Activated naive CD8-positive, alpha-beta T cell treated with anti-CD3 and anti-CD28 coated beads, Interleukin-2, amount 10 ng/mL, durations not matched to agents 7 days and 5 days (primary cell): ENCODE measurements at regions of chr9 and their contacts with region 1.

Region 1: GRCh38 chr9:99104459-99105151 is at the start of gene TGFBR1:
- DNase-seq: peak; percentile 99
- ATAC-seq: peak; percentile 87
- H3K4me3 Mint-ChIP-seq: peak within 1 kb of the TSS; percentile 89
- H3K27ac Mint-ChIP-seq: peak within 1 kb of the TSS; percentile 95
- H3K4me1 Mint-ChIP-seq: peaks cover 51% of the 10 kb centered on the region
- H3K27me3 Mint-ChIP-seq: no peaks in the 10 kb centered on the region
- total RNA-seq, gene TGFBR1: 82.7 to 83.5 TPM

Region 2: GRCh38 chr9:99012942-99013512 is 91.6 kb before region 1 on chr9:
- POLR2A ChIA-PET with region 1: interaction called, 32 read pairs
- DNase-seq: peak; percentile 50
- ATAC-seq: peak; percentile 56
- H3K4me3 Mint-ChIP-seq: peak overlapping the region; percentile 71
- H3K27ac Mint-ChIP-seq: peak overlapping the region; percentile 96
- H3K4me1 Mint-ChIP-seq: peaks cover 27% of the 10 kb centered on the region
- H3K27me3 Mint-ChIP-seq: peaks cover 2% of the 10 kb centered on the region

Region 3: DNA sequence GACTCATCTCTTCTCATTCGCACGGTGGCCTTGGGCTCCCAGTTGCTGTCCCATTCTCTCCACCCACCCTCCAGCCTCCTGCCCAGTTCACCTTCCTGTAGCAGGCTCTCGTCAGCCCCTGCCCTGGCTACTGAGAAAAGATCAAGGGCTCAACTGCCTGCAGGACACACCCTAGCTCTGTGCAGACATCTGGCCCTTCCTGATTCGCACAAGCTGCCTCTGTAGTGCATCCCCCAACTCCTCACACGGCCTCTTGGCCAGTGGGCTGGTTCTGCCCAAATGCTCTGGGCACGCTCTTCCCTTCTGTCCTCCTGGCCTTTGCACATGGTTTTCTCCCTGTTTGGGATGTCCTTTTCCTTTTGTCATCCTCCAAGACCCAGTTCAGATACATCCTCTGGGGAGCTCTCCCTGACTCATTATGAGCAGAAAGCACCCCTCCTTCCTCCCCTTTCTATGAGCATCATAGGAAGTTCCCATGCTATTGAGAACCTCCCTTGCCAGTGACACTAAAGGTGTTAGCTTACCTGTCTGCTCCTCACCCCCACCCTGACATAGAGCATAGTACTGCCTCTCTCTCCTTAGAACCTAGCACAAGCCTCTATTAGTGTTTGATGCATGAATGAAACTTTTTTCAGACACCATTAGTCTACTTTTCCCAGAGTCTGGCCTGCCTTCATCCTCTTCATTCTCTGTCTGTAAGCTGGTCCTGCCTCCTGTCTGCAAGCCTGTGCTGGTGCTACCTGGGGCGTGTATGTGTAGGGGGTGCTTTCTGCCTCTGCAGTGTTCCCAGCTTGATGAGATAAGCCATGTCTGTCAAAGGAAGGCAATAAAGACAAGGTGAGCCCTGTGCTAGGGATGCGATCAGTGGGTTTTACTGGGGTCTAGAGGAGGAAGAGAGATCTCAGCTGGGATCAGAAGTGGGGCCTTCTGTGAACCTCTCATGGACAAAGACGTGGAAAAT is 78.0 kb before region 1 on chr9:
- POLR2A ChIA-PET with region 1: no interaction called
- DNase-seq: no peak
- ATAC-seq: peak; percentile 32
- H3K4me3 Mint-ChIP-seq: no peak overlapping the region
- H3K27ac Mint-ChIP-seq: peak overlapping the region; percentile 51
- H3K4me1 Mint-ChIP-seq: peaks cover 22% of the 10 kb centered on the region
- H3K27me3 Mint-ChIP-seq: no peaks in the 10 kb centered on the region

Region 4: DNA sequence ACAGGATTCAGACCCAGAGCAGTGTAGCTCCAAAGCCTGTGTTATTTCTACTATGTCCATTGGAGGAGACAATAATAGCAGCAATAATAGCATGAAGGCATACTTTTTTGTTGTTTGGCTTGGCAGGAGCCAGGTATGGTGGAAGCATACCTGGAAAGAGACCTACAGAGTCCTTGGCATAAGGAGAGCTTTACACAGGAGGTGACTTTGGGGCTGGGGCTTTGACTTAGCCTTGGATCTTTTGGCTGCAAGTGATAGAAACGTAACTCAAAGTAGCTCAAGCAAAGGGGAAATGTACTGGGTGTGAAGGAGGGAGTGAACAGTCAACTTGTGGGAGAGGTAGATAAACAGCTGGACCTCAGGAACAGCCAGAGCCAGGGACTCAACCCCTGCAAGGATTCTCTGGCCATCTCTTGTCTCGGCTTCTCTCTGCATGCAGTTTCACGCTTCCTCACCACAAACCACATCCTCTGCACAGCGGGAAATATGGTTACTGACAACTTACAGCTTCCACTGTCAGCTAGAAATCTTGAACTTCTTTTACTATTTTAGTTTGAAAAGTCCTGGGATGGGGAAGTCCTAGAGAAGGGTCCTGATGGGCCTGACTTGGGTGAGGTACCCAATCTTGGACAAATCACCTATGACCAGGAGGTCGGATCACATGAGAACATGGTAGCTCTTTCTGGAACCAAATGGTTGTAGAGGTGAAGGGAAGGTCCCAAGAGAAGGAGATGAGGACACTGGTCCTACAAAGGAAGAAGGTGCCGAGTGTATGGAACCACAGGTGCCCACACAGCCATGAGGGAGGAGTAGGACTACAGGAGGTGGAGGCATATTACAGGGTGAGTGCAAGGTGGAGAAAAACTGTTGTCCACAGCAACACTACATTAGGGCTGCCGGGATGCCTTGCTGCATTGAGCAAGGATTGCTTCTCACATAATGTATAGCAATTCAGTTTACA is 46.7 kb before region 1 on chr9:
- POLR2A ChIA-PET with region 1: interaction called, 52 read pairs
- DNase-seq: peak; percentile 73
- ATAC-seq: peak; percentile 61
- H3K4me3 Mint-ChIP-seq: peak overlapping the region; percentile 85
- H3K27ac Mint-ChIP-seq: peak overlapping the region; percentile 97
- H3K4me1 Mint-ChIP-seq: peaks cover 55% of the 10 kb centered on the region
- H3K27me3 Mint-ChIP-seq: peaks cover 2% of the 10 kb centered on the region

Region 5: DNA sequence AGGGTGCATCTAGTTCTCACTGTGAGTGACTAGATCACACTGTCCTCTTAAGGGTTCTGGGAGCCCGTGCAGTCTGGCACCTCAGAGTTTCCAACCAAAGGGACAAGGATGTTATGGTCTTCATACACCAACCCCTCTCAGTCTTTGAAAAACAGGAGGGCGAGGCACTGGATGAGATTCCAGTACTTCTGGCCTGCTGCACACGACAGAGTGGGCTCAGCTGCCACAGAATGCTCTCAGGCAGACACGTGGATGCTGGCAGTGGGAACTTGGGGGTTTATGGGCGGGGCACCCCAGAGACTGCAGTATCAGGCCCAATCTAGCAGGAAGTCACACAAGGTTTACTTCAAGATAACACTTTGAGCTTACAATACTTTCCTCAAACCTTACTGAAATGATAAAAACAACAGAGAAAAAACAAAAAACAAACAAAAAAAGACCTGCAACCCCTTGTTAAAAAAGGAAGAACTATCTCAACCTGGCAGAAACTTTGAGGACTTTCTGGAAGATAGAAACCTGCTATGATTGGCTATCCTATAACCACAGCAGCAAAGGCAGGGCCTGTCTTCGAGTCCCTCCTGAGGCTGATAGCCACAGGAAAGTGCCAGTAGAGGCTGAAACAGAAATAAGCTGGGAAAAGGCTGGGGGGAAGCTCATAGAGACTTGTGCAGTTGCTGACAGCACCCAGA is 28.0 kb before region 1 on chr9:
- POLR2A ChIA-PET with region 1: interaction called, 21 read pairs
- DNase-seq: peak; percentile 65
- ATAC-seq: peak; percentile 95
- H3K4me3 Mint-ChIP-seq: peak overlapping the region; percentile 53
- H3K27ac Mint-ChIP-seq: peak overlapping the region; percentile 89
- H3K4me1 Mint-ChIP-seq: peaks cover 38% of the 10 kb centered on the region
- H3K27me3 Mint-ChIP-seq: peaks cover 2% of the 10 kb centered on the region

Region 6: GRCh38 chr9:99092643-99093491 is 11.7 kb before region 1 on chr9:
- POLR2A ChIA-PET with region 1: interaction called, 85 read pairs
- DNase-seq: peak; percentile 65
- ATAC-seq: peak; percentile 83
- H3K4me3 Mint-ChIP-seq: peak overlapping the region; percentile 74
- H3K27ac Mint-ChIP-seq: peak overlapping the region; percentile 93
- H3K4me1 Mint-ChIP-seq: peaks cover 63% of the 10 kb centered on the region
- H3K27me3 Mint-ChIP-seq: no peaks in the 10 kb centered on the region

Region 7: GRCh38 chr9:99118782-99119466 is 14.3 kb after region 1 on chr9:
- POLR2A ChIA-PET with region 1: interaction called, 15 read pairs
- DNase-seq: no peak
- ATAC-seq: peak; percentile 99
- H3K4me3 Mint-ChIP-seq: peak overlapping the region; percentile 83
- H3K27ac Mint-ChIP-seq: peak overlapping the region; percentile 93
- H3K4me1 Mint-ChIP-seq: peaks cover 70% of the 10 kb centered on the region
- H3K27me3 Mint-ChIP-seq: no peaks in the 10 kb centered on the region

Region 8: DNA sequence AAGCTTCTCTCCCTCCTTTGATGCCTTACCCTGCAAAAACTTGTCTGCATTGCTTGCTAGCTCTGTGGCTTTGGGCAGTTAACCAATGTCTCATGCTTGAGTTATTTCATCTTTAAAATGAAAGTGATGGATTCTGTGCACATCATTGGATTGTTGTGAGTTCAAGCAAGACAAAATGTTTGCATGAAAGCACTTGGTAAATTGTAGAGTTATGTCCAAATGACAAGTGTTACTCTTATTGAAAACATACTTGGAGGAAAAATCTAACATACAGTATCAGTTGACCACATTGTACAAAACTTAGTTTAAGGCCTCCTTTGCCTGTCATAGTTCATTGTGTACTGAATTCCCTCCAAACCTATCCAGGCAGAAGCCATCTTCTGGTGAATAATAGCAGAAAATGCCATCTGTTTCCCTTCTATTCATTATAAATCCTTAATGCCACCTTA is 30.3 kb after region 1 on chr9:
- POLR2A ChIA-PET with region 1: interaction called, 10 read pairs
- DNase-seq: no peak
- ATAC-seq: peak; percentile 53
- H3K4me3 Mint-ChIP-seq: peak overlapping the region; percentile 65
- H3K27ac Mint-ChIP-seq: peak overlapping the region; percentile 71
- H3K4me1 Mint-ChIP-seq: peaks cover 61% of the 10 kb centered on the region
- H3K27me3 Mint-ChIP-seq: no peaks in the 10 kb centered on the region